MCF 10A (cell line): ENCODE measurements at regions of chr3 and their contacts with region 1.

Region 1: DNA sequence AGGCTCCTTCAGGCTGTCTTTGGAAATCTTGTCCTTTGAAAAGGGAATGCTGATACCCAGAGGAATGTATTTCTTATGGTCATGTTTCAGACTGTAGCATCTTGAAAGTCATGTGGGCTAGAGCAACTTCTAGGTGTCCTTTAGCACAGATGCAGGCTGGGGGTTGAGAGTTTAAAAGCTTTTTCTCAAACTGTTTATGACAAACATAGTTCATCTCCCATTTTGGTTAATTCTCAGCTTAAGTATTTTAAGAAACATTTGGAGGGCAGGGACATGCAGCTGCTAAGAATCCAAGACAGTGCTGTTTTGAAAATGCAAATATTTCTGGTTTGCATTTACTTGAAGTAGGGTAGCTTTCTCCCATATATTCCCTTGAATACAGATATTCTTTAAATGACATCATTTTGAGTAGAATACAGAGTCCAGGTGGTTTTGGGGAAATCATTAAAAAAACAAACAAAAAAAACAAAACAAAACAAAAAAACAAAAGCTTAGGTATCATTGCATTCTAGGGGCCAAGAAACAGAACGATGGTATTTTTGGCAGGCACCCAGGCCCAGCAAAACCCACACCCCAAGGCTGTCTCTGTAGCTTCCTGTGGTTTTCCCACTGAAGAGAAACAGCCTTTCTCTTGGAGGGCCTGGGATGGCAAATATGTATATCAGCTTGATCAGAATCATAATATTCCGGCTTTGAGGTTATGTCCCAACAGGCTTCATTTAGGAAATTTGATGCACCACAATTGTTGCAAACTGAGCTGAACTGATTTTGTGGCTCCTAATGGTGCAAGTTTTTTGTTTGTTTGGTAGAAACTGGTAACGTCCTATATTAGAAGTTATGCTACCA is 120.0 kb downstream of the ATG7 start:
- DNase-seq: peak; percentile 79
- H3K4me3 Mint-ChIP-seq: no peak overlapping the region
- H3K27ac Mint-ChIP-seq: no peak overlapping the region
- H3K4me1 Mint-ChIP-seq: peaks cover 29% of the 10 kb centered on the region
- H3K27me3 Mint-ChIP-seq: no peaks in the 10 kb centered on the region
- CTCF ChIP-seq: no peak

Region 2: GRCh38 chr3:11530153-11530721 is 138.0 kb after region 1 on chr3:
- CTCF ChIA-PET with region 1: no interaction called
- POLR2A ChIA-PET with region 1: interaction called, 4 read pairs
- intact Hi-C with region 1: loop called (anchors 5 kb)
- DNase-seq: peak; percentile 90
- H3K4me3 Mint-ChIP-seq: no peak overlapping the region
- H3K27ac Mint-ChIP-seq: peak overlapping the region; percentile 31
- H3K4me1 Mint-ChIP-seq: peaks cover 25% of the 10 kb centered on the region
- H3K27me3 Mint-ChIP-seq: no peaks in the 10 kb centered on the region
- CTCF ChIP-seq: no peak